BJ (cell line): ENCODE measurements at regions of chr13 and their contacts with region 1.

Region 1: GRCh38 chr13:57611969-57612368 is 19.6 kb upstream of the PCDH17 start:
- DNase-seq: no peak
- H3K4me3 ChIP-seq: no peak overlapping the region
- H3K27me3 ChIP-seq: no peaks in the 10 kb centered on the region
- CTCF ChIP-seq: no peak

Region 2: GRCh38 chr13:57624565-57625435 is 12.8 kb after region 1 on chr13:
- CTCF ChIA-PET with region 1: interaction called, 17 read pairs
- POLR2A ChIA-PET with region 1: no interaction called
- DNase-seq: no peak
- H3K4me3 ChIP-seq: no peak overlapping the region
- H3K27me3 ChIP-seq: peaks cover 5% of the 10 kb centered on the region
- CTCF ChIP-seq: peak; percentile 77

Region 3: GRCh38 chr13:57716295-57716694 is 104.3 kb after region 1 on chr13:
- CTCF ChIA-PET with region 1: no interaction called
- POLR2A ChIA-PET with region 1: no interaction called
- DNase-seq: no peak
- H3K4me3 ChIP-seq: no peak overlapping the region
- H3K27me3 ChIP-seq: no peaks in the 10 kb centered on the region
- CTCF ChIP-seq: no peak

Region 4: GRCh38 chr13:57874530-57874929 is 262.6 kb after region 1 on chr13:
- CTCF ChIA-PET with region 1: no interaction called
- POLR2A ChIA-PET with region 1: no interaction called
- DNase-seq: no peak
- H3K4me3 ChIP-seq: no peak overlapping the region
- H3K27me3 ChIP-seq: no peaks in the 10 kb centered on the region
- CTCF ChIP-seq: no peak